ENCODE measurements at regions of chr1 and their contacts with region 1.

Region 1: GRCh38 chr1:11681071-11681771 is at the start of gene MAD2L2:
- DNase-seq: peak; percentile 75
- ATAC-seq: peak; percentile 94
- H3K4me3 ChIP-seq: peak within 1 kb of the TSS; percentile 81
- H3K27ac ChIP-seq: peak within 1 kb of the TSS; percentile 84
- H3K4me1 ChIP-seq: peaks cover 3% of the 10 kb centered on the region
- H3K27me3 ChIP-seq: peaks cover 5% of the 10 kb centered on the region
- CTCF ChIP-seq: no peak
- POLR2A ChIP-seq: peak; percentile 43
- RAD21 ChIP-seq: no peak
- total RNA-seq, gene MAD2L2: 44.6 and 47.5 TPM in 2 replicates

Region 2: GRCh38 chr1:11176081-11176706 is 505.0 kb before region 1 on chr1:
- CTCF ChIA-PET with region 1: no interaction called
- POLR2A ChIA-PET with region 1: interaction called, 11 read pairs
- dilution Hi-C with region 1: no loop called
- in situ Hi-C with region 1: no loop called
- intact Hi-C with region 1: no loop called
- DNase-seq: peak; percentile 33
- ATAC-seq: peak; percentile 21; the same call in 1 of the 2 replicates
- H3K4me3 ChIP-seq: no peak overlapping the region
- H3K27ac ChIP-seq: no peak overlapping the region
- H3K4me1 ChIP-seq: peaks cover 17% of the 10 kb centered on the region
- H3K27me3 ChIP-seq: no peaks in the 10 kb centered on the region
- CTCF ChIP-seq: no peak
- POLR2A ChIP-seq: no peak
- RAD21 ChIP-seq: no peak

Region 3: DNA sequence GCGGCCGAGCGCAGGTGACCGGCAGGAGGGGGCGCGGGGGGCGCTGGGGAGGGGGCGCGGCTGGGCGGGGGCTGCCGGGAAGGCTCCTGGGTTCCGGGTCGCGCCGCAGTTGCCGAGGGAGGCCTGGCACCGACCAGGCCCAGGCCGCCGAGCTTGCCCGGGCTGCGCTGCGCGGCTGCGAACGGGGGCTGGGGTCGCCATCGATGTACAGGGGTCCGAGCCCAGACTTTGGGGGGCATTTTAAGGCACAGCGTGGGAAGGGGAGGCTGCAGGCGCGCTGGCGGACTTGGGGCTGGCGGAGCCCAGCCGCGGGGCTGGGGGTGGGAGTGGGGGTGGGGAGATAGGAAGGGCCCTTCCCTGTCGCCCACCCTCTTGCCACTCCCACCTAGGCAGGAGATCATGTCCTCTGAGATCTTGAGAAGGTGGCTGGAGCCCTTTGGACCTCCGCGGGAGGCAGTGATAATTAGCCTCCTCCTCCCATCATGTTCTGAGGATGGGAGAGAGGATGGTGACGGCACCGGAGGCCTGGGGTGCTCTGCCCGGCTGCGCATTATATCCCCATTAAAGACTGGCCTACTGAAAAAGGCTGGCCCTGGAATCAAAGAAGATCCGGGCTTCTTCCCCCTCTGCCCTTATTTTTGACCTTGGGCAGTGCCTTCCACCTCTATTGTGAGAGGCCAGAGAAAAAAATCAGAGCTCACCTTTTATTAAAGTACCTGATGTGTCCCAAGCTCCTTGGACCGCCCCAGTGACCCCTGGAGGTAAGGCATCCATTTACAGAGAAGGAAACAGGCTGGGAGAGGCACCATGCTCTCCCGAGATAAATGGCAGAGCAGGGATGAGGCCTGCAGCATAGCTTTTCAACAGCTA is 26.0 kb before region 1 on chr1:
- CTCF ChIA-PET with region 1: no interaction called
- POLR2A ChIA-PET with region 1: no interaction called
- dilution Hi-C with region 1: no loop called
- in situ Hi-C with region 1: no loop called
- intact Hi-C with region 1: loop called (anchors 2 kb)
- DNase-seq: no peak
- ATAC-seq: peak; percentile 42
- H3K4me3 ChIP-seq: peak overlapping the region; percentile 89
- H3K27ac ChIP-seq: no peak overlapping the region; the same call in 1 of the 2 replicates
- H3K4me1 ChIP-seq: no peaks in the 10 kb centered on the region
- H3K27me3 ChIP-seq: peaks cover 6% of the 10 kb centered on the region; the same call in 1 of the 2 replicates
- CTCF ChIP-seq: no peak
- POLR2A ChIP-seq: no peak
- RAD21 ChIP-seq: no peak

Region 4: DNA sequence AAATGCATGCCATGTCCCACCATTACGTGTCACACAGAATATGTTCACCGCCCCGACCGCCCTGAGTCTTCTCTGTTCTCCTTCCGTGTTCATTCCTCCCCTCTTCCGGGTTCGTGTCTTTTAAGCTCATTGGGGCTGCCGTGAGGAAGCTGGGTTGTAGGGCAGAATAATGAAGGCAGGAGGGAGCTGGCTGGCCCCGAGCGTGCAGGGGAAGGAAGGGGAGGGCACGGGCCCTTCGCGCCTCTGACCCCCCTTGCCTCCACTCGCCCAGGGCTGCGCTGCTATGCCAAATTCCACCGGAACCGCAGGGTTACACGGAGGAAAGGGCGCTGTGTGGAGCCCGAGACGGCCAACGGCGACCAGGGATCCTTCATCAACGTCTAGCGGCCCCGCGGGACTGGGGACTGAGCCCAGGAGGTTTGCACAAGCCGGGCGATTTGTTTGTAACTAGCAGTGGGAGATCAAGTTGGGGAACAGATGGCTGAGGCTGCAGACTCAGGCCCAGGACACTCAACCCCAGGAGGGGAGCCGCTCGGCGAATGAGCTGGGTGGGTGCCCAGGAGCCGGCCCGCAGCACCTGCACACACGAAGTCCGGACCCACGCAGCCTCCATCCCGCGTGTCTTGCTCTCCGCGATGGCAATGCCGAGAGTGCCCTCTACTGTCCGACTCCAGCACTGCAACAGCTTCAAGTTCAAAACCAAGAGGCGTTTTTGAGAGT is 38.3 kb after region 1 on chr1:
- CTCF ChIA-PET with region 1: interaction called, 4 read pairs
- POLR2A ChIA-PET with region 1: no interaction called
- dilution Hi-C with region 1: no loop called
- in situ Hi-C with region 1: no loop called
- intact Hi-C with region 1: loop called (anchors 2 kb)
- DNase-seq: peak; percentile 61
- ATAC-seq: peak; percentile 93
- H3K4me3 ChIP-seq: no peak overlapping the region
- H3K27ac ChIP-seq: no peak overlapping the region
- H3K4me1 ChIP-seq: no peaks in the 10 kb centered on the region
- H3K27me3 ChIP-seq: peaks cover 22% of the 10 kb centered on the region
- CTCF ChIP-seq: peak; percentile 87
- POLR2A ChIP-seq: no peak
- RAD21 ChIP-seq: peak; percentile 90

Region 5: DNA sequence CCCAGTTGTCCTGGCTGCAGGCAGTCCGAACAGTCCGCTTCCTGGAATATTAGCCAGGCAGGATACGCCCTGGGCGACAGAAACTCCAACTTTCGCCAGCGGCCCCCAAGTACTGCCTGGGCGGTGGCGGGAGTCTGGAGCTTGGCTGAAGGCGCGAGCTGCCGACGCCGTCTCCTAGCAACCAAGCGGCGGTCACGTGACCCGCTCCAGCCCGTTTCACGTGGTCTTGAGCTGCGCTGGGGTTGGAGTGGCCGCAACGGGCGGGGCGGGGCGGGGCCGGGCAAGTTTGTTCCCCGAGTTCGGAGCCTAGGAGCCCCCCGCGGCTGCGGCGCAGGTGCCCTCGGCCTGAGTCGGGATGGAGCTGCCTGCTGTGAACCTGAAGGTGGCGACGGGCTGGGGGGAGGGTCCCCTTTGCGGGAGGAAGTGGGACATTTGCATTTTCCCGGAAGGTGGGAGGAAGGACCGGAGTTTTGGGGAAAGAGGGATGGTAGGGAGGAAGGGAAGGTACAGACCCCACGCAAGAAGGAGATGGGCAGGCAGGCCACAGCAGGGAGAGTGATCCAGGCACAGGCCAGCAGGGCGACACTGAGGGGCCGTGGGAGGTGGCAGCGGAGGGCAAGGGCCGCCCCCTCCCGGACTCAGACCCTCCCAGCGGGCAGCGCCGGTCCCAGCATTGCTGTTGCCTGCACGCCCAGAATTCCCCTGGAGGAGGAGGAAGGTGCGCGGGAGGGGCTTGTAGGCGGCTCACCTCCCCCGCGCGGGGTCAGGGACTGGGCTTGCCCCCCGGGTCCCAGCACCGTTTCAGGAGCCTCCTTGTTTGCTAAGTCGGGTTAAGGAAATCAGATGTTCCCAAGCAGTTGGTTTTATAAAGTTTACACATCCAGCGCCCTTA is 54.9 kb after region 1 on chr1 and contains the start of gene AGTRAP:
- CTCF ChIA-PET with region 1: no interaction called
- POLR2A ChIA-PET with region 1: no interaction called
- dilution Hi-C with region 1: no loop called
- in situ Hi-C with region 1: no loop called
- intact Hi-C with region 1: no loop called
- DNase-seq: peak; percentile 87
- ATAC-seq: peak; percentile 81
- H3K4me3 ChIP-seq: peak within 1 kb of the TSS; percentile 80
- H3K27ac ChIP-seq: peak within 1 kb of the TSS; percentile 66
- H3K4me1 ChIP-seq: peaks cover 9% of the 10 kb centered on the region
- H3K27me3 ChIP-seq: no peaks in the 10 kb centered on the region
- CTCF ChIP-seq: no peak
- POLR2A ChIP-seq: no peak
- RAD21 ChIP-seq: no peak
- total RNA-seq, gene AGTRAP: 21.5 and 22.2 TPM in 2 replicates

Region 6: GRCh38 chr1:11802973-11803885 is 122.0 kb after region 1 on chr1:
- CTCF ChIA-PET with region 1: no interaction called
- POLR2A ChIA-PET with region 1: no interaction called
- dilution Hi-C with region 1: no loop called
- in situ Hi-C with region 1: no loop called
- intact Hi-C with region 1: loop called (anchors 5 kb)
- DNase-seq: peak; percentile 97
- ATAC-seq: peak; percentile 69
- H3K4me3 ChIP-seq: peak overlapping the region; percentile 53
- H3K27ac ChIP-seq: peak overlapping the region; percentile 70
- H3K4me1 ChIP-seq: peaks cover 13% of the 10 kb centered on the region
- H3K27me3 ChIP-seq: no peaks in the 10 kb centered on the region
- CTCF ChIP-seq: no peak
- POLR2A ChIP-seq: peak; percentile 68
- RAD21 ChIP-seq: no peak; the same call in 1 of the 2 replicates

Measured in IMR-90 (cell line).